IMR-90 (cell line): ENCODE measurements at regions of chr15 and their contacts with region 1.

Region 1: DNA sequence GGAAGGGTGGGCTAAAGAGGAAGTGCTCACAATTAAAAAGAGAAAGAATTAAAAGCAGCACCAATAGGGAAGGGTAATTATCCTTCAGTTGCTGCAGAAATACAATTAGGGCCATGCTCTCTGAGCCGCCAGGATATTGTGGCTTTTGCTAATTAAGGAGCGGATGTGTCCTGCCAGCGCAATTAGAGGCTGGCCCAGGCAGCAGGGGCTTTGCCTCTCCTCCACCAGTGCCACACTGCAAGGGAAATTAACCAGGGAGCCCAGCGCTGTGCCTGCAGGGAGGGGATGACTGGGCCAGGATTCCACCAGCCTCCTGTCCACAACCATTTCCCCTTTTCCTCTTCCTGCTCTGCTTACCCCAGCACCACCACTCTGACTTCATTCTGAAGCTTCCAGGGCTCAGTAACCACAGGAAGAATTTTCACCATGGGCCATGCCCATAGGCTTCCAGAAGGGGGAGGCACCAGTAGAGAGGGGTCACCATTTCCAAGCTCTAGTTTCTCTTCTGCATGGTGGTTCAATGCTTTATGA is 10.4 kb upstream of the AEN start:
- DNase-seq: peak; percentile 13
- ATAC-seq: peak; percentile 25; the same call in 1 of the 2 replicates
- H3K4me3 ChIP-seq: no peak overlapping the region
- H3K27ac ChIP-seq: no peak overlapping the region
- H3K4me1 ChIP-seq: peaks cover 4% of the 10 kb centered on the region; the same call in 1 of the 2 replicates
- H3K27me3 ChIP-seq: peaks cover 34% of the 10 kb centered on the region
- CTCF ChIP-seq: 0 out of 2 replicates have a peak, but pooled peaks have one; percentile 13
- POLR2A ChIP-seq: no peak
- RAD21 ChIP-seq: no peak

Region 2: DNA sequence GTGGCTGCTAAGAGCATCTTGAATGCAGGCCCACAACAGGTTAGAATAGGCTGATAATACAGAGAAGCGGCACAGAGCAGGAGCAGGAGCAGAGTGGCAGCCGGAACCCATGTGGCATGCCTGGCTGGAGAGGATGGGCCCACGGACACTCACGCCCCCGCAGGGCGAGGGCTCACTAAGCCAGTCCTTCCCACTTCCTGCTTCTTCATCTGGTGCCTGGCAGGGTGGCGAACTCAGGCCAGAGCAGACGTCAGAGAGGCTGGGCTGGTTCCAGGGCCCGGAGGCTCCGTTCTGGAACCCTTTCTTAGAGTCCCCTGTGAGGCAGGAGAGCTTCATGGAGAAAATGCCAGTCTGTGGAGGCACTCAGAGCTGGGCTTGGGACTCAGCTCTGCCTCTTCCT is 549.3 kb before region 1 on chr15:
- CTCF ChIA-PET with region 1: no interaction called
- POLR2A ChIA-PET with region 1: no interaction called
- dilution Hi-C with region 1: no loop called
- in situ Hi-C with region 1: no loop called
- intact Hi-C with region 1: no loop called
- DNase-seq: no peak
- ATAC-seq: no peak
- H3K4me3 ChIP-seq: no peak overlapping the region
- H3K27ac ChIP-seq: no peak overlapping the region
- H3K4me1 ChIP-seq: no peaks in the 10 kb centered on the region
- H3K27me3 ChIP-seq: no peaks in the 10 kb centered on the region
- CTCF ChIP-seq: no peak
- POLR2A ChIP-seq: no peak
- RAD21 ChIP-seq: no peak

Region 3: DNA sequence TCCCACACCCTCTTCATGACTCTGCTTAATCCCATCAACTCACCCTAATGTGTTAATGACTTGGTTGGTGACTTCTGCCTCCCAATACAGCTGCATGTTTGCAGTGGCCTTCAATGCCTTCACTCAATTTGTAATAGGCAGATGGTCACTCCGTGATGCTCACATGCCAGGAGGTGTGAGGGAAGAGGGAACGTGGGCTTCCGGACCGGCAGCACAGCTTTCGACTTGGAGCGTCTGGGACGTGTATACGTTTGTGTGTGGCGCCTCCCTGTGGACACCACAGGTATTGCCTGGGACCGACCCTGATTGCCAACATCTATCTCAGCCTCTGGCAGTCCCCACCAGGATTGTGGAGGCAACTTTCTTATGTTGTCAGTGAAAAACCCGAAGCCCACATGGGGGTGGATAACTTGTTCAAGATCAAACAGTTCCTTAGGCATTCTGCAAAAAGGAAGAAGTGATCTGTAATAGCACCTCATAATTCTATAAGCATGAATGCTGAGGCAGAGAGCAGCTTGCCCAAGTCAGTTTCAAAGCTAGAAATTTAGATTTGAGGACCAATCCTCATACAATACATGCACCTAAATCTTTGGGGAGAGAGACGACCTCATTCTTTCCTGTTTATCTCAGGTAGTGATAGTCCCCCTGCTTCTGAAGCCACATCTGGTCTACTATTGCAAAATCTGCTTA is 160.5 kb before region 1 on chr15:
- CTCF ChIA-PET with region 1: no interaction called
- POLR2A ChIA-PET with region 1: no interaction called
- dilution Hi-C with region 1: no loop called
- in situ Hi-C with region 1: no loop called
- intact Hi-C with region 1: no loop called
- DNase-seq: peak; percentile 66
- ATAC-seq: peak; percentile 71
- H3K4me3 ChIP-seq: no peak overlapping the region
- H3K27ac ChIP-seq: no peak overlapping the region
- H3K4me1 ChIP-seq: peaks cover 1% of the 10 kb centered on the region; the same call in 1 of the 2 replicates
- H3K27me3 ChIP-seq: peaks cover 8% of the 10 kb centered on the region
- CTCF ChIP-seq: peak; percentile 77
- POLR2A ChIP-seq: no peak
- RAD21 ChIP-seq: peak; percentile 84

Region 4: DNA sequence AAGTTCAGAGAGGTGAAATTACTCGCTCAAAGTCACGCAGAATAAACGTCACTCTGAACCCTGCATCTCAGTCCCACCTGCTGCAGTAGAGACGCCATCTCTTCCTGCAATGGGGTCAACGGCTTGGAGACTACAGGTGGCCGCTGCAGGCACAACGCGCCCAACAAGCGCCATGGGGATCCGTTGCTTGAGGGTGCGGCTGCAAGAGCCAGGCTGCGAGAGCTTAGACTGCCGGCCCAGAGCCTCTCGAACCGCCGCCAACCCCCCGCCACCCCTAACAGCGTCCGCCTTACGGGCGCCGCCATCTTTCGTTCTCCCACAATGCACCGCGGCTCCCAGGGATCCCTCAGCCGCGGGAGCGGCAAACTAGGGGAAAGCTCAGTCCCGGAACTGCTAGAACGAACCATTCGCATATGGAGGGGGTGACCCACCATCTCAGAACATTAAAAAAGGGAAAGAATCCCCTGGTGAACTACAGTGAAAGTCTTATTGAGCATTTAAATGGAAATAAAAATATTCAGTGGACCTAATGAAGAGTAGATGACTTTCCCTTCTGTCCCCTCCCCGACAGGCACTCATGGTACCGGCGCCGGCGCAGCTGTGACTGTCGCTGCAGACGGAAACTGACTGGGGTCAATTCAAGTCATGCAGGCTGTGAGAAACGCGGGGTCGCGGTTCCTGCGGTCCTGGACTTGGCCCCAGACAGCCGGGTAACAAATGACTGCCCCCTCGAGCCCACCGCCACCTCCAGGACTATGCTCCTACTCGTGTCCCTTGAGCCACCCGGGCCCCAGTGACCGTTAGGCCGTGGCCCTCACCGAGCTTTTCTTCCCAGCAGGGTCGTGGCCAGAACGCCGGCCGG is 143.5 kb before region 1 on chr15 and contains the starts of genes MRPL46 and MRPS11:
- CTCF ChIA-PET with region 1: no interaction called
- POLR2A ChIA-PET with region 1: no interaction called
- dilution Hi-C with region 1: no loop called
- in situ Hi-C with region 1: loop called (anchors 5 kb)
- intact Hi-C with region 1: no loop called
- DNase-seq: peak; percentile 83
- ATAC-seq: peak; percentile 98
- H3K4me3 ChIP-seq: peak within 1 kb of the TSS; percentile 68
- H3K27ac ChIP-seq: peak within 1 kb of the TSS; percentile 77
- H3K4me1 ChIP-seq: peaks cover 7% of the 10 kb centered on the region
- H3K27me3 ChIP-seq: no peaks in the 10 kb centered on the region
- CTCF ChIP-seq: no peak
- POLR2A ChIP-seq: no peak; the same call in 1 of the 2 replicates
- RAD21 ChIP-seq: no peak
- total RNA-seq, gene MRPL46: 14.2 and 16.4 TPM in 2 replicates
- total RNA-seq, gene MRPS11: 45.5 and 66.1 TPM in 2 replicates

Region 5: DNA sequence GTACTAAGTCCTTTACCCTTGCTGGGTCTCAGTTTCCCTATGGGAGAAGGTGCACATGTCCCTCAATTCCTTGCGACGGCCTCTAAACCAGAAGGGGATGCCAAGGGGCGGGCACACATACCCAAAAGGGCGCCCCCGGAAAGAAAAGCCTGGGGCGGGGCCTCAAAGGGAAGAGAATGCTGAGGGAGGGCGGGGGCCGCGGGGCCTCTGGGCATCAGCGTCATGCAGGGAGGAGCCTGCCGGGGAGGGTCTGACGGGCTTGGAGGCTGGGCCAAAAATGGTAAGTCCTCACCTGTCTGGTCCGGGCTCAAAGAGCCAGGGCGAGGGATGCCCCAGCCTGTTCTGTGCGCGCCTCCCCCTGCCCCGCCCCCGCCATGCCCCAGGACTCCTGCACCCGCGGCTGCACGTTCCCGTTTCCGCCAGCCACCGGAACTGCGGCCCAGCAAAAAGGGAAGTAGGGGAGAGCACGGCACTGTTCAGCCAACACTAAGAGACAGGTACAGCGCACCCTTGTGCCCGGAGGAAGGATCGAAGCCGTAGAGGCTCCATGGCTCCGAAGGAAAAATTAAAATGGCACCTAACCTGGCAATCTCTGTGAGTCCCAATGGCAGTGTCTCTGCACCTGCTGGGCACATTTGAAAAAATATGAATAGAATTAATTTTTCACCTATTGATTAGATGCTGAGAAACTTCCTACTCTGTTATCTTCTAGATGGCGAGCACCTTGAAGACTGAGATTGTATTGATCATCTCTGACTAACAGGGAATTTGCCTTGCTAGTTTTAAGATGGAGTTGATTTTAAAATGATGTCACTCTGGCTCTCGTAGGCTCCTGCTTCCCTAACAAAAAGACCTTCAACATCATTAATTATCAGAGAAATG is 64.3 kb before region 1 on chr15 and contains the start of gene DET1:
- CTCF ChIA-PET with region 1: no interaction called
- POLR2A ChIA-PET with region 1: no interaction called
- dilution Hi-C with region 1: no loop called
- in situ Hi-C with region 1: no loop called
- intact Hi-C with region 1: loop called (anchors 2 kb)
- DNase-seq: peak; percentile 94
- ATAC-seq: peak; percentile 99
- H3K4me3 ChIP-seq: peak within 1 kb of the TSS; percentile 84
- H3K27ac ChIP-seq: peak within 1 kb of the TSS; percentile 94
- H3K4me1 ChIP-seq: peaks cover 4% of the 10 kb centered on the region
- H3K27me3 ChIP-seq: no peaks in the 10 kb centered on the region
- CTCF ChIP-seq: peak; percentile 88
- POLR2A ChIP-seq: no peak
- RAD21 ChIP-seq: peak; percentile 41; the same call in 1 of the 2 replicates
- total RNA-seq, gene DET1: 8.6 and 9.1 TPM in 2 replicates